ENCODE measurements at regions of chr19 and their contacts with region 1.

Region 1: DNA sequence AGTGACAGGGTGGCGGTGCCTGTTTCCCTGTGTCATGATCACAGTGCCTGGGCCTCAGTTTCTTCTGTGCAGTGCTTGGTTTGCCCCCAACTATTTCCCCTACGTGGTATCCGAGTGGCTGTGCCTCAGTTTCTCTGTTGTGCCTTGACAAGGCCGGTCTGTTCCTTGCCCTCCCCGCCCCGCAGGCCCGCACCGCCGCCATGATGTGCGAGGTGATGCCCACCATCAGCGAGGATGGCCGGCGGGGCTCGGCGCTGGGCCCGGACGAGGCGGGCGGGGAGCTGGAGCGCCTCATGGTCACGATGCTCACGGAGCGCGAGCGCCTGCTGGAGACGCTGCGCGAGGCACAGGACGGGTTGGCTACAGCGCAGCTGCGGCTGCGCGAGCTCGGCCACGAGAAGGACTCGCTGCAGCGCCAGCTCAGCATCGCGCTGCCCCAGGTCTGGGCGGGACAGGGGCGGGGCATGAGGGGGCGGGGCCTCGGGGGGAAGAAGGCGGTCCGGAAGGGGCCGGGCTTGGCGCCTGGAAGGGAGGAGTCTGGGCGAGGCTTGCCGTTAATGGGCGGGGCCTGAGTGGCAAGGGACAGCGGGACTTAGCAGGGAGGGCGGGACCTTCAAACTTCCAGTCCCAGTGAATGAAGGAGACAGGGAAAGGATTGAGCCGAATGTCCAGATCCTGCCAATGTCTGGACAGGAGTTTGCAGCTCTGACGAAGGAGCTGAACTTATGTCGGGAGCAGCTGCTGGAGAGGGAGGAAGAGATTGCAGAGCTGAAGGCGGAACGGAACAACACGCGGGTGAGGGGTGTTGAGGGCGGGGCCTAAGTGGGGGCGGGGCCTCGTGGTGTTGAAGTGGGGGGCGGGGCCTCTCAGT is 8.6 kb downstream of the PPFIA3 start:
- DNase-seq: peak; percentile 82 to 97
- H3K4me3 ChIP-seq: peak overlapping the region in 1 of 2 donors; percentile 53
- H3K27ac ChIP-seq: peak overlapping the region in 1 of 2 donors; percentile 67
- H3K4me1 ChIP-seq: peaks cover 0 to 9% of the 10 kb centered on the region in 2 donors
- H3K27me3 ChIP-seq: no peaks in the 10 kb centered on the region
- CTCF ChIP-seq: peak in 2 of 3 experiments; percentile 13 to 20

Region 2: GRCh38 chr19:49085020-49085867 is 42.7 kb before region 1 on chr19 and contains the start of gene SNRNP70:
- intact Hi-C with region 1: no loop called
- DNase-seq: peak; percentile 97 to 100
- H3K4me3 ChIP-seq: peak within 1 kb of the TSS; percentile 78 to 84
- H3K27ac ChIP-seq: peak within 1 kb of the TSS; percentile 81 to 83
- H3K4me1 ChIP-seq: peaks cover 9 to 16% of the 10 kb centered on the region in 2 donors
- H3K27me3 ChIP-seq: no peaks in the 10 kb centered on the region
- CTCF ChIP-seq: no peak
- total RNA-seq, gene SNRNP70: 185 TPM

Region 3: DNA sequence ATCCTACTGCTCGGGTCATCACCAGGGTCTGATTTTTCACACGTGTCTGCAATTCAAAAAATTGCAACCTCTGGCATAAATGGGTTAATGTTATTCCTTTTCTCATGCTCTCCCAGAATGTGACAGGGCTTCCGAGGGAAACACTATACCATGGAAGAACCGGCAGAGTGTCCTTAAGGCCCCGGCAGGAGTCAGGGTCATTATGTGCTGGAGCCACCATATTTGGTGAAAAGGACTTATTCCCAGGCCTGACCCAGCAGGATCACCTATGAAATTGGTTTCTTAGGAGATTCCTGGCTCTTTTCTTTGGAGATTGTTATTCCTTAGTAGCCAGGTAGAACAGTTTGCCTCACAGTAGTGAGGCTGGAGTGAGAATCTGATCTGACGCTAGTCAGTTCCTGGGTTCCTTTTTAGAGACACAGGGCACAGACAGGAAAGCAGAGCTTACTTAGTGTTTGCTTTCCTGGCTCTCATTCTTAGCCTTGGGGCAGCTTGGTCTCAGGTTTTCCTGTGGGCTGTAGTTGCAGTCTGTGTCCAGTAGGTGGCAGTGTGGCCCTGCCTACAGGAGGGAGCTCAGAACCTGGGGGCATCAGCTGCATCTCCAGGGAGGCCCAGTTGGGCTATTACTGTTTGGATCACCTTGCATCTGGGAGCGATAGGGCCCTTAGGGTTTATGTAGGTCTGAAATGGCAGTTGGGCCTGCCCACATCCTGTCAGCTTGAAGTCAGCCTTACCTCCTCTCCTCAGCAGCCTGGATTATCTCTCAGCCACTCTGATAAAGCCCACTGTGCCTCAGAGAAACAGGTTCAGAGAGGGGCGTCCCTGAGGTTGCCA is 30.2 kb before region 1 on chr19:
- intact Hi-C with region 1: no loop called
- DNase-seq: peak in 1 of 2 donors; percentile 80
- H3K4me3 ChIP-seq: no peak overlapping the region
- H3K27ac ChIP-seq: no peak overlapping the region
- H3K4me1 ChIP-seq: no peaks in the 10 kb centered on the region
- H3K27me3 ChIP-seq: no peaks in the 10 kb centered on the region
- CTCF ChIP-seq: peak; percentile 95 to 99 (median 98)

Region 4: GRCh38 chr19:49142866-49143335 is 15.0 kb after region 1 on chr19:
- intact Hi-C with region 1: loop called (anchors 2 kb)
- DNase-seq: peak; percentile 64 to 94
- H3K4me3 ChIP-seq: peak overlapping the region; percentile 41 to 67
- H3K27ac ChIP-seq: no peak overlapping the region
- H3K4me1 ChIP-seq: peaks cover 0 to 8% of the 10 kb centered on the region in 2 donors
- H3K27me3 ChIP-seq: no peaks in the 10 kb centered on the region
- CTCF ChIP-seq: no peak

Measured in ascending aorta (tissue), 2 donors.